ENCODE measurements at regions of chr2 and their contacts with region 1.

Region 1: GRCh38 chr2:8421658-8422449 is 260.0 kb upstream of the ID2 start:
- DNase-seq: peak; percentile 71
- ATAC-seq: peak; percentile 85
- H3K4me3 ChIP-seq: no peak overlapping the region
- H3K27ac ChIP-seq: peak overlapping the region; percentile 46
- H3K4me1 ChIP-seq: peaks cover 16% of the 10 kb centered on the region
- H3K27me3 ChIP-seq: no peaks in the 10 kb centered on the region
- CTCF ChIP-seq: peak; percentile 26 to 44 (median 29); a peak in 5 of 6 replicates
- EP300 ChIP-seq: peak; percentile 56 to 80; a peak in 3 of 4 replicates
- POLR2A ChIP-seq: no peak
- RAD21 ChIP-seq: peak; percentile 49

Region 2: DNA sequence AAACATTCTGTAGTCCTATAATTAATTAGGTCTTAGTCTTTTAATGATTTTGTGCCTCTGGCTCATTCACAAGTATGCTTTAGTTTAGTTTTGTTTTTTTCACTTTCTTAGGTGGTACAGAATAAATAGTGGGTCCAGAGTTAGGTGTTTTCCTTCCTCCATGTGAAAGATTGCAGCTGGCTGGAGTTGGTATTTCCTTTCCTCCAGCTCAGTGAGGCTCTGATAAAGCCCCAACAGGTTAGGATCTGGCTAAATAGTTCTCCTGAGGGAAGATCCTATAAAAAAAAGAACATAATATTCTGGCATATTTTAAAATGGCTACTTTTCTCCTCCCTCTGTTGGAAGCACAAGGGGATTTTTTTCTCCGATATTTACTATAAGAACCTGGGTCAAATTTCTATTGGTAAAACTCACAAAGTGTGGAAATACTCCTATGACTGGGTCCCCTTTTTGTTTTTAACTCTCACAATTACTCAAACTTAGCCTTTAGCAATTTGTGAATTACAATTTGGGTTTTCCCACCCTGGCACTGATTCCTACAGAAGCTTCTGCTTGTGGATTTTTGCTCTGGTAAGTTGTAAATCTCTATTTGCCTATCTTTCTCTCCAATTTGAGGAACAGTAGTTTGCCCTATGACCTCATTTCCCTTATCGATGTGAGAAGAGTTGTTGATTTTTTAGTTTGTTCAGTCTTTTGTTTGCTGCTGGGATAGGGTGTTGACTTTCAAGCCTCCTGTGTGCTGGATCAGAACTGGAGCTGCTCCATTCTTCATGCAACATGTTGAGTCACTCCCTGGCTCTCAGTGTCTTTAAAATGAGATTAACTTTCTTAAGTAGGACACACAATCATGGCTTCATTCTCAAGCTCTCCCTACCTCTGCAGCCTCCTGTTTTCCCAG is 1003.8 kb before region 1 on chr2:
- CTCF ChIA-PET with region 1: no interaction called
- POLR2A ChIA-PET with region 1: no interaction called
- RAD21 ChIA-PET with region 1: no interaction called
- SMC1A ChIA-PET with region 1: no interaction called
- in situ Hi-C with region 1: no loop called
- intact Hi-C with region 1: no loop called
- DNase-seq: no peak
- ATAC-seq: no peak
- H3K4me3 ChIP-seq: no peak overlapping the region
- H3K27ac ChIP-seq: no peak overlapping the region
- H3K4me1 ChIP-seq: no peaks in the 10 kb centered on the region
- H3K27me3 ChIP-seq: peaks cover 0 to 6% of the 10 kb centered on the region in 2 experiments; a peak in 2 of 4 replicates
- CTCF ChIP-seq: no peak
- EP300 ChIP-seq: no peak
- POLR2A ChIP-seq: no peak
- RAD21 ChIP-seq: no peak

Region 3: GRCh38 chr2:8378016-8378810 is 43.6 kb before region 1 on chr2:
- CTCF ChIA-PET with region 1: interaction called, 3 read pairs
- POLR2A ChIA-PET with region 1: no interaction called
- RAD21 ChIA-PET with region 1: interaction called, 4 read pairs
- SMC1A ChIA-PET with region 1: interaction called, 4 read pairs
- in situ Hi-C with region 1: no loop called
- intact Hi-C with region 1: loop called (anchors 1 kb)
- DNase-seq: peak; percentile 63
- ATAC-seq: peak; percentile 88
- H3K4me3 ChIP-seq: no peak overlapping the region
- H3K27ac ChIP-seq: no peak overlapping the region
- H3K4me1 ChIP-seq: peaks cover 33% of the 10 kb centered on the region
- H3K27me3 ChIP-seq: no peaks in the 10 kb centered on the region
- CTCF ChIP-seq: no peak
- EP300 ChIP-seq: peak in 1 of 2 experiments; percentile 42; a peak in 2 of 4 replicates
- POLR2A ChIP-seq: no peak
- RAD21 ChIP-seq: 0 out of 2 replicates have a peak, but pooled peaks have one; percentile 4

Region 4: DNA sequence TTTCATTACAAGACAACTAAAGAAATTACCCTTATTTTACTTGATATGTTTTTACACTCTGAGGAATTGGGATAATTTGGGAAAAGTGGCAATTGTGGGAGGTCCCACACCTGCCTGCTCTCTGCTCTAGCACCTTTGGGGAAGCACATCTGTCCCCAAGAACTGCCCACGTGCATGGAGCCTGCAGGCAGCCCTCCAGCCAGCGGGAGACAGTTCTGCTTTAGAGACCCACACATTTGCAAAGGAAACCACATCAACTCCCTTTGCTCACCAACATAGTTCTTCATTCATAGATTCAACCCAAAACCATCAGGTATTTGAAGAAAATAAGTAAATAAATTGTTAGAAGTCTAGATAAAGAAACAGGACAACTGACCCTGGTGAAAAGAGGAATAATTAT is 20.1 kb after region 1 on chr2:
- CTCF ChIA-PET with region 1: interaction called, 22 read pairs
- POLR2A ChIA-PET with region 1: interaction called, 4 read pairs
- RAD21 ChIA-PET with region 1: interaction called, 4 read pairs
- SMC1A ChIA-PET with region 1: interaction called, 13 read pairs
- in situ Hi-C with region 1: no loop called
- intact Hi-C with region 1: no loop called
- DNase-seq: no peak
- ATAC-seq: peak; percentile 89
- H3K4me3 ChIP-seq: no peak overlapping the region
- H3K27ac ChIP-seq: no peak overlapping the region
- H3K4me1 ChIP-seq: peaks cover 14% of the 10 kb centered on the region
- H3K27me3 ChIP-seq: no peaks in the 10 kb centered on the region
- CTCF ChIP-seq: no peak
- EP300 ChIP-seq: peak; percentile 15 to 45; a peak in 2 of 4 replicates
- POLR2A ChIP-seq: no peak
- RAD21 ChIP-seq: no peak

Region 5: DNA sequence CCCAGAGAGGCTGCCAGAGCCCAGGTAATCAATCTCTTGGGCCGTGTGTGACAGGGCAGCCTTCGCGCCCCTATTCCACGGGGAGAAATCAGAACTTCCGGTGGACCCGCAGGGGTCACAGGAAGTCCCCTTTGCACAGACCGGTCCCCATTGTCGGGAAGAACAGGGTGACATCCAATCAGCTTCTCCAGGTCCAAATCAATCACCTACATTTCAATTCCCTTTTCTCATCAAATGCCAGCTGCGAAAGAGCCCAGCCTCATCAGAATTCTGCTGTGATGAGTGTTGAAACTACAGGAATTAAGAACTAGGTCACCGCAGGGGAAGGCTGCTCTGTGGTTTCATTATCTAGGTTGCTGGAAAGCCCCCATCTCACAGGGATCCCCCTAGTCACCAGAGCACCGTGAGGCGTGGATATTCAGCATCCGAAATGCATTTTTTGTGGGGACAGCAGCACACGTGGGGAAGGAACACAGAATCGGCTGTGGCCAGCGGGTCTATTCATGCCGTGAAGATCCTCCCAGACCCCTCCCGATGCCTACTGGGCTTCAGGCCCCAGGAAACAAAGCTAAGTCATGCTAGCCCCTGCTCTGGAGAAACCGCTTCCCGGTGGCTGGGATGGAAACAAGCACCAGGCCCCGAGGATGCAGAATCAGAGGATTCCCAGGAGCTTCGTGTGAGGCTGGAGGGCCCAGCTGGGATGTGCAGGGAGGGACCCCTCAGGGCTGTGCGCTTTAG is 66.3 kb after region 1 on chr2:
- CTCF ChIA-PET with region 1: interaction called, 16 read pairs
- POLR2A ChIA-PET with region 1: interaction called, 6 read pairs
- RAD21 ChIA-PET with region 1: interaction called, 23 read pairs
- SMC1A ChIA-PET with region 1: interaction called, 17 read pairs
- in situ Hi-C with region 1: no loop called
- intact Hi-C with region 1: no loop called
- DNase-seq: peak; percentile 95
- ATAC-seq: peak; percentile 63
- H3K4me3 ChIP-seq: peak overlapping the region; percentile 75
- H3K27ac ChIP-seq: peak overlapping the region; percentile 80
- H3K4me1 ChIP-seq: peaks cover 19% of the 10 kb centered on the region
- H3K27me3 ChIP-seq: no peaks in the 10 kb centered on the region
- CTCF ChIP-seq: no peak
- EP300 ChIP-seq: peak; percentile 78 to 80; a peak in 3 of 4 replicates
- POLR2A ChIP-seq: no peak
- RAD21 ChIP-seq: peak; percentile 1; the same call in 1 of the 2 replicates

Region 6: GRCh38 chr2:8729939-8730338 is 308.1 kb after region 1 on chr2:
- CTCF ChIA-PET with region 1: no interaction called
- POLR2A ChIA-PET with region 1: no interaction called
- RAD21 ChIA-PET with region 1: no interaction called
- SMC1A ChIA-PET with region 1: no interaction called
- in situ Hi-C with region 1: no loop called
- intact Hi-C with region 1: no loop called
- DNase-seq: no peak
- ATAC-seq: no peak
- H3K4me3 ChIP-seq: no peak overlapping the region
- H3K27ac ChIP-seq: no peak overlapping the region
- H3K4me1 ChIP-seq: no peaks in the 10 kb centered on the region
- H3K27me3 ChIP-seq: no peaks in the 10 kb centered on the region
- CTCF ChIP-seq: no peak
- EP300 ChIP-seq: no peak
- POLR2A ChIP-seq: no peak
- RAD21 ChIP-seq: no peak

Region 7: DNA sequence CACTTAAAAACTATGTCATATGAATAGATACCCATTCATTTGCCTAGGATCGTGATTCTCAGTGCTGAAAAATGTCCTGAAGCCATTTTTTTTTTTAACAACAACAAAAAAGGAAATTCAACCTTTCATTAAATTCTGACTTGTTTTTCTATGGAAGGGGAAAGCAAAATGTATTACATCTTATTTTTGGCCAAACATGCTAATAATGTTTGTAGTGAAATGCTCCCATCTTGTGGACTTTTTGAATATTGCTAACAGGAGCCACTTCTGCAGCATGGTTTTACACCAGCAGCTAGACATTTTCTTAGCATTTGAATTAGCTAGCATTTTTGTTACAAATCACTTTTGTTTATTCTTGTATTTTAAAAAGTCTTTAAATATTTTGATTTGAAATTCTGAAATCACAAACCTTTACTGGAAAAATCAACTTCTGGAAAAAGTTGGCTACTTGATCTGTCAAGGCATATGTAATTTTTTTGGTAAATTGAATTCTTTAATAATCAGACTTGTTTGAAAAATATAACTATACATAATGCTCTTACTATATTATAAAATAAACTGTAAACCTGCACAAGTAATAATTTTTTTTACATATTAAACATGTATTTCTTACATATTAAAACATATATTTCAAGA is 339.8 kb after region 1 on chr2:
- CTCF ChIA-PET with region 1: no interaction called
- POLR2A ChIA-PET with region 1: no interaction called
- RAD21 ChIA-PET with region 1: no interaction called
- SMC1A ChIA-PET with region 1: no interaction called
- in situ Hi-C with region 1: no loop called
- intact Hi-C with region 1: loop called (anchors 5 kb)
- DNase-seq: peak; percentile 35
- ATAC-seq: peak; percentile 65
- H3K4me3 ChIP-seq: no peak overlapping the region
- H3K27ac ChIP-seq: no peak overlapping the region
- H3K4me1 ChIP-seq: no peaks in the 10 kb centered on the region
- H3K27me3 ChIP-seq: no peaks in the 10 kb centered on the region
- CTCF ChIP-seq: peak; percentile 49 to 65 (median 56)
- EP300 ChIP-seq: no peak
- POLR2A ChIP-seq: no peak
- RAD21 ChIP-seq: peak; percentile 67